Panc1 (cell line): ENCODE measurements at regions of chr12 and their contacts with region 1.

Region 1: DNA sequence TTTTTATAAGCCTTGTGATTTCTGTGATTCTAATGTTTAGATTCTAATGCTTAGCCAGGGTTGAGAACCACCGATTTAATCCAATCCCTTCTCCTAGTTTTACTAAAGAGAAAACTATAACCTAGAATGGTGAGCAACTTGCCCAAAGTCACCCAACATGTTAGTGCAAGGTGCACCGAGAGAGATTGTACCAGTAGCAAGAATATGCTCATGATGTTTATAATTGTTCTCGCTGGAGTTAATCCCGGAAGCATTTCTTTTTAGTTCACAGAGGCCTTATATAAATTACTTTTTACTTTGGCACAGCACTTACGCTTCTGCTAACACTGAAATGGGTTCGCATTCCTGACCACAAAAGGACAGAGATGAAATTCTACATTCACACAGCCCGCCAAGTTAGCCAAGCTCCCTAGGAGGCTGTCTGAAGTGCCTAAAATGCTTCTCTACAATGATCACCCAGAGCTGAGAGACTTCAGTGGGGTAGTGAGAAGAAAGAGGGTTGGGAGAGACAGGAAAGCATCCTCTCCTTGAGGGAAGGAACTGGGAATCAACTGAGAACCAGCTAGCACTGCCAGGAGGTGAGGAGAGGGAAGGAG is 579 bp upstream of the BLOC1S1 start:
- DNase-seq: no peak
- ATAC-seq: no peak
- H3K4me3 ChIP-seq: peak overlapping the region; percentile 70 to 78
- H3K27ac ChIP-seq: peak overlapping the region; percentile 93
- H3K4me1 ChIP-seq: peaks cover 20% of the 10 kb centered on the region
- H3K27me3 ChIP-seq: no peaks in the 10 kb centered on the region
- CTCF ChIP-seq: no peak

Region 2: DNA sequence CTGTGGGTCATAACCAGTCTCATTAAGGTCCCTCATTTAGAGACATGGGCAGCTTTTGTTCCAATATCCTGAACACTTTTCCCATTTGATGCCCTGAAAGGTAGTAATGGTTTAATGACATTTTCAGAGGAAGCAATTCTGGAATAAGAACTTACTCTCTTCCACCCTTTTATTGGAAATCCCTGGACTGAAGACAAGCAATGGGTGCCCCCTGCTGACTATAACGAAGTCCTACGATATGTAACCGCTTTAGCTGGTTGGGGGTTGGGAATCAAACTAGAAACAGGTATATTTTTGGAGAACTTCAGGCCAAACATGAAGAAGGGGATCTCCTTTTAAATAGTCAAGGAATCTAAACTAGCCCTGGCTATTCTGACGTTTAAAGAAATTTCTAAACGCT is 81.8 kb after region 1 on chr12:
- CTCF ChIA-PET with region 1: no interaction called
- POLR2A ChIA-PET with region 1: no interaction called
- in situ Hi-C with region 1: no loop called
- intact Hi-C with region 1: no loop called
- DNase-seq: no peak
- ATAC-seq: no peak; the same call in 1 of the 2 replicates
- H3K4me3 ChIP-seq: no peak overlapping the region
- H3K27ac ChIP-seq: no peak overlapping the region
- H3K4me1 ChIP-seq: 0 out of 2 replicates have a peak, but pooled peaks cover 3% of the 10 kb centered on the region
- H3K27me3 ChIP-seq: no peaks in the 10 kb centered on the region
- CTCF ChIP-seq: peak; percentile 68

Region 3: GRCh38 chr12:56266693-56267442 is 551.6 kb after region 1 on chr12 and contains the start of gene COQ10A:
- CTCF ChIA-PET with region 1: interaction called, 10 read pairs
- POLR2A ChIA-PET with region 1: no interaction called
- in situ Hi-C with region 1: no loop called
- intact Hi-C with region 1: no loop called
- DNase-seq: peak; percentile 65
- ATAC-seq: peak; percentile 96
- H3K4me3 ChIP-seq: peak within 1 kb of the TSS; percentile 68 to 69
- H3K27ac ChIP-seq: peak within 1 kb of the TSS; percentile 75
- H3K4me1 ChIP-seq: peaks cover 8% of the 10 kb centered on the region; the same call in 1 of the 2 replicates
- H3K27me3 ChIP-seq: no peaks in the 10 kb centered on the region
- CTCF ChIP-seq: peak; percentile 79
- total RNA-seq, gene COQ10A: 20.0 TPM